Psoas muscle (tissue), 8 donors: ENCODE measurements at regions of chr12 and their contacts with region 1.

Region 1: DNA sequence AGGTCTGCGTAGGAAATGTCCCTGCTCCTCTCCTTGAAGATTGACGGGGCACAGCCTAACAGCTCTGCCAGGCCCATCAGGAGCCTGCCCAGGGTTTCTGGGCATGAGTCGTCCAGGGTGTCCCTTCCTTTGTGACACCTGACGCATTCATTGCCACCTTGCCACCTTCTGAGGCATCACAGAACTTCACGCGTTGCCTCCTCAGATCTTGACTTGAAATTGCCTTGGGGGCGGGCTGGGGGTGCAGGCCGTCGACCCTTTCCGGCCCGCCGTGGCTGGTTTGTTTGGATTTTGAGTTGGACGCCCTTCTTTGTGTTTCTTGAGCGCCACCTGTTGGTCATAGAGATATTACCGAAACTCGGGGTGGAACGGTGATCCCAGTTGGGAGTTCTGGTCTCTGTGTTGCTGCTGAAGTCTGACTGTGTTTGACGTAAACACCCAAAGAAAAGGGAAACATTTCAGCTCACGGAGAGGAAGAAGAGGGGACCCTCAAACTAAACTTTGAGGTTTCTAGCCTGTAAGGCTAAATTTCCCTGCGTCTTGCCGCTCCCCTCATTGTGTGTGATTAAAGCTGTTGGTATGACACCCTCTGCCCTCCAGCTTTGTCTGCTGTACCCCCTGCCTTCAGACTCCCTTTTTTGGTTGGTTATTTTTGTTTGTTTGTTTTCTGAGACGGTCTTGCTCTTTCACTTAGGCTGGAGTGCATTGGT is 44.6 kb downstream of the MLXIP start:
- DNase-seq: peak; percentile 63 to 74
- ATAC-seq: peak; percentile 28 to 60 (median 46)
- H3K4me3 ChIP-seq: no peak overlapping the region
- H3K27ac ChIP-seq: peak overlapping the region; percentile 83
- H3K4me1 ChIP-seq: peaks cover 67% of the 10 kb centered on the region
- H3K27me3 ChIP-seq: no peaks in the 10 kb centered on the region
- CTCF ChIP-seq: peak; percentile 76

Region 2: GRCh38 chr12:122040579-122041386 is 82.4 kb before region 1 on chr12:
- intact Hi-C with region 1: no loop called
- DNase-seq: no peak
- ATAC-seq: no peak
- H3K4me3 ChIP-seq: no peak overlapping the region
- H3K27ac ChIP-seq: no peak overlapping the region
- H3K4me1 ChIP-seq: no peaks in the 10 kb centered on the region
- H3K27me3 ChIP-seq: no peaks in the 10 kb centered on the region
- CTCF ChIP-seq: no peak

Region 3: GRCh38 chr12:122052285-122052684 is 70.9 kb before region 1 on chr12:
- intact Hi-C with region 1: loop called (anchors 1 to 2 kb)
- DNase-seq: no peak
- ATAC-seq: no peak
- H3K4me3 ChIP-seq: no peak overlapping the region
- H3K27ac ChIP-seq: peak overlapping the region; percentile 91
- H3K4me1 ChIP-seq: peaks cover 33% of the 10 kb centered on the region
- H3K27me3 ChIP-seq: no peaks in the 10 kb centered on the region
- CTCF ChIP-seq: no peak

Region 4: GRCh38 chr12:122081697-122082221 is 41.4 kb before region 1 on chr12:
- intact Hi-C with region 1: loop called (anchors 5 kb)
- DNase-seq: peak in 1 of 2 donors; percentile 41
- ATAC-seq: no peak
- H3K4me3 ChIP-seq: peak overlapping the region; percentile 97
- H3K27ac ChIP-seq: peak overlapping the region; percentile 98
- H3K4me1 ChIP-seq: peaks cover 62% of the 10 kb centered on the region
- H3K27me3 ChIP-seq: no peaks in the 10 kb centered on the region
- CTCF ChIP-seq: no peak

Region 5: GRCh38 chr12:122087431-122088178 is 35.6 kb before region 1 on chr12:
- intact Hi-C with region 1: loop called (anchors 5 kb)
- DNase-seq: peak in 1 of 2 donors; percentile 39
- ATAC-seq: peak; percentile 70 to 82 (median 76)
- H3K4me3 ChIP-seq: peak overlapping the region; percentile 44
- H3K27ac ChIP-seq: peak overlapping the region; percentile 92
- H3K4me1 ChIP-seq: peaks cover 93% of the 10 kb centered on the region
- H3K27me3 ChIP-seq: no peaks in the 10 kb centered on the region
- CTCF ChIP-seq: no peak